Dorsolateral prefrontal cortex (tissue), 120 donors: ENCODE measurements at regions of chr21 and their contacts with region 1.

Region 1: GRCh38 chr21:36156339-36156814 is 247 bp upstream of the DOP1B start:
- DNase-seq: peak; percentile 99 to 100 (median 100)
- H3K4me3 ChIP-seq: peak overlapping the region; percentile 72 to 99 (median 90)
- H3K27ac ChIP-seq: peak overlapping the region in 45 of 59 donors; percentile 4 to 91 (median 79)
- H3K27me3 ChIP-seq: no peaks in the 10 kb centered on the region
- CTCF ChIP-seq: peak in 4 of 56 donors; percentile 7 to 25 (median 16)

Region 2: GRCh38 chr21:36260030-36260787 is 103.8 kb after region 1 on chr21:
- intact Hi-C with region 1: loop called in 1 of 2 experiments (anchors 5 kb)
- DNase-seq: peak in 2 of 10 donors; percentile 14 to 21
- H3K4me3 ChIP-seq: peak overlapping the region; percentile 21 to 80 (median 62)
- H3K27ac ChIP-seq: peak overlapping the region; percentile 18 to 93 (median 82)
- H3K27me3 ChIP-seq: no peaks in the 10 kb centered on the region
- CTCF ChIP-seq: peak; percentile 64 to 96 (median 83)